ENCODE measurements at regions of chr2 and their contacts with region 1.

Region 1: GRCh38 chr2:10408649-10409579 is 39.2 kb downstream of the ODC1 start:
- DNase-seq: peak; percentile 92
- ATAC-seq: peak; percentile 59

Region 2: DNA sequence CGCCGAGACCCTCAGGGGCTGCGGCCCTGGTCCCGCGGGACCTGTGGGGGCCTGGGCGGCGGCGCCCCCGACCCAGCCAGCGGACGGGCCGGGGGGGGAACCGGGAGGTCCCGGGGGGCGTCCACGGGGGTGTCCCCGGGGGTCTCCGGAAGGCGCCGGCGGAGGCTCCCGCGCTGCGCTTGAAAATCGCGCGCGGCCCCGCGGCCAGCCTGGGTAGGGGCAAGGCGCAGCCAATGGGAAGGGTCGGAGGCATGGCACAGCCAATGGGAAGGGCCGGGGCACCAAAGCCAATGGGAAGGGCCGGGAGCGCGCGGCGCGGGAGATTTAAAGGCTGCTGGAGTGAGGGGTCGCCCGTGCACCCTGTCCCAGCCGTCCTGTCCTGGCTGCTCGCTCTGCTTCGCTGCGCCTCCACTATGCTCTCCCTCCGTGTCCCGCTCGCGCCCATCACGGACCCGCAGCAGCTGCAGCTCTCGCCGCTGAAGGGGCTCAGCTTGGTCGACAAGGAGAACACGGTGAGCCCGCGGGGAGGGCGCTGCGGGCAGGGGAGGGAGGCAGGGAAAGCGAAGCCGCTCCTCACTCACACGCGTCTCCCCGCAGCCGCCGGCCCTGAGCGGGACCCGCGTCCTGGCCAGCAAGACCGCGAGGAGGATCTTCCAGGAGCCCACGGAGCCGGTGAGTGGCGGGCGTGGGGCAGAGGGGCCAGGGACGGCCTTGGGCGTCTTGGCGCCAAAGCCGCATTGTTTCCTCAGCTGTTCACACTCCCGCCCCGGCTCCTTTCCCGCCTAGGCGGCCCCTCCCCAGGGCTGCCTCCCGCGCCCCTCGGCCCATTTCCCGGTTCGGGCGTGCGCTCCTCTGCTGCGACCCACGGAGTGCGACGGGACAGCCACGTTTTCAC is 286.3 kb before region 1 on chr2 and contains the start of gene RRM2:
- intact Hi-C with region 1: loop called (anchors 1 kb)
- DNase-seq: peak; percentile 96
- ATAC-seq: peak; percentile 92
- total RNA-seq, gene RRM2: 4.2 TPM

Region 3: DNA sequence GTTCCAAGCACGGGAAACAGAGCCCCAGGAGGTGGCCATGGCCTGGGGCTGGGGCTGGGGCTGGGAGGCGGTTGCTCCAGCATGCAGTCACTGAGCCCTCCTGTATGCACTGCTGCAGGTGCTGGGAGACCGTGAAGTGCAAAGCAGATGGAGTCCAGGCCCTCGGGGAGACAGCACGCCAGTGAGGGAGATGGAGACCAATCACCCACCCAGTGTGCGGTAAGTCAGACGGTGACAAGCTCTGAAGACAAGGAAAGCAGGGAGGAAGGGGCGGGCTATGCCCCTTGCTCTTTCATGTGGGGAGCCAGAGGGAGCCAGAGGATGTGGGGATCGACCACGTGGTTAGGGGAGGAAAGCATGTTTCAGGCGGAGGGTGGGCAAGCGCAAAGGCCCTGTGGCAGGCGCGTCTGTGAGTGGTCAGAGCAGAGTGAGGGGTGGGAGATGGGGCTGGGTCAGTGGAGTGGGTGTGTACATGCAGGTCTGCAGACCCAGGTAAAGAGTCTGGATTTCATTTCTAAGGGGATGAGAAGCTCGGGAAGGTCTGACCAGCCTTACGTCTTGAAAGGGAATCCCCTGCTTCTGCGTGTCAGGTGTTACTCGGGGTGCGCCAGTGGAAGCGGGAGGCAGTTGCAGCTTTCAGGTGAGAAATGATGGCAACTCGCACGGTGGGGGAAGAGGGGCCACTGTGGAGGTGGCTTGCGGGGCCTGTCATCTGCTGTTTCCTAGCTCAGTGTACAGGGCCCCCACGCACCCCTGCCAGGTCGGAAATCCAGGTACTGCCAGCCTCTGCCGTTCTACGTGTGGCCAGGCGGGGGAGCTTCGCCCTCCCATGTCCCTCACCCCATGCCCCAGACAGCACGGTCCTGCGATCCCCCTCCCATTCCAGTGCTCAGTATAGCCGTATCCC is 266.9 kb before region 1 on chr2:
- intact Hi-C with region 1: loop called (anchors 5 kb)
- DNase-seq: peak; percentile 73
- ATAC-seq: peak; percentile 53

Region 4: GRCh38 chr2:10239561-10239967 is 169.3 kb before region 1 on chr2:
- intact Hi-C with region 1: loop called (anchors 5 kb)
- DNase-seq: no peak
- ATAC-seq: no peak

Region 5: DNA sequence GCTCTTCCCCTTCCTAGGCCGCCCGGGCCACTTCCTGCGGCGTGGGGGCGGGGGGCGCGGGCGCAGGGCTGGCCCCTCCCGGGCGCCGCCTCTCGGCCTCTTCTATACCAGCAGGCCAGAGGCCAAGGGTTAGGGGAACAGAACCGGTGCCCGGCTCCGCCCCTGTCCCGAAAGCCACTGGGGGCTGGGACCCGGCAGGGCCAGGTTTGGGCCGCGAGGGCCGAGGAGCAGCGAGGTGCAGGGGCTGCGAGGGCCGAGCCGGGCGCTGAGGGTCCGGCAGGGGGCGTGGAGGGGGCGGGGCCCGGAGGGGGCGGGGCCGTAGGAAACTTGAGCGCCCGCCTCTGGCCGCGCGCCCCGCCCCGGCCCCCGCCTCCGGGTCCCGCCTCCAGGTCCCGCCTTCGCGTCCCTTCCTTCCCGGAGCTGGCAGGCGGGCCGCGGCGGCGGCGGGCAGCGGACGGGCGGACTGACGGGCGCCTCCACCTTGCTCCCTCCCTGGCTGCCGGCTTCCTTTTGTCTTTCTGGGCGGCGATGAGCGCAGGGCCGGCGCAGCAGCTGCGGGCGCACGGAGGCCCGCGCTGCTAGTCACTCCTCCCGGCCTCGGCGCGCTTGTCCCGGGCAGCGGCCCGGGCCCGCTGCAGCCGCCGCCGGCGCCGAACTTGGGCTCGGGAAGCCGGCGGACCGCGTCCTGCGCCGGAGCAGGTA is 106.3 kb before region 1 on chr2 and contains the start of gene HPCAL1:
- intact Hi-C with region 1: loop called (anchors 1 kb)
- DNase-seq: peak; percentile 94
- ATAC-seq: peak; percentile 91
- total RNA-seq, gene HPCAL1: 41.9 TPM

Region 6: DNA sequence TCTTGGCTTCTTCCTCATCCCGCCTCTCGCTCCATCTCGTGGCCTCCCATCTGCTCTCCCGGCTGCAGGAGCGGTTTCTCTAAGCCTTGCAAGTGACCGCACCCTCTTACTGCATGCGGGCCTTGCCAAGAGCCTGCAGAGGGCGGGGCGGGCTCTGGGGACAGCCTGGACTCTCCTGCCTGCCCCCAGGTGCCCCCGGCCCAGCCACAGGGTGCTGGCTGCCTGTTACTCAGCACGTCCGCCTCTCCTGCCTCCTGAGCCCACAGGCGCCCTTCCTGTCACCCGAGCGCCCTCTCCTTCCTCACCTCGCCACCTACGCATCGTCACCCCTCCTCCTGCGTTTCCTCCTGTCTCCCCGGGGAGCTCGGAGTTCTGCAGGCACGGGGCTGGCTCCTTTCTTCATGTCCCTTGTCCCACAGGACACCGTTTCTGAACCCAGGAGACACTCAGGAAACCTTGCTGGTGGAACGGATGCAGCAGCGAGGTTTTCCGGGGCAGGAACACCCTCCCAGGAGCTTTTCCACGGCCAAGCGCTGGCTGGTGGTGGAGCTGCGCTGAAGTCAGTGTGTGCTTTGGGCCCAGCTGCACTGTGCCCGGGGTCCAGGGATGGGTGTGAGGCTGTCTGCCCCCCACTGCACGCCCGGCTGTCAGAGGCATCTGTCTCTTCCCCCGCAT is 77.8 kb before region 1 on chr2:
- intact Hi-C with region 1: loop called (anchors 2 kb)
- DNase-seq: peak; percentile 87
- ATAC-seq: peak; percentile 63